GM10248 (cell line): ENCODE measurements at regions of chr1 and their contacts with region 1.

Region 1: DNA sequence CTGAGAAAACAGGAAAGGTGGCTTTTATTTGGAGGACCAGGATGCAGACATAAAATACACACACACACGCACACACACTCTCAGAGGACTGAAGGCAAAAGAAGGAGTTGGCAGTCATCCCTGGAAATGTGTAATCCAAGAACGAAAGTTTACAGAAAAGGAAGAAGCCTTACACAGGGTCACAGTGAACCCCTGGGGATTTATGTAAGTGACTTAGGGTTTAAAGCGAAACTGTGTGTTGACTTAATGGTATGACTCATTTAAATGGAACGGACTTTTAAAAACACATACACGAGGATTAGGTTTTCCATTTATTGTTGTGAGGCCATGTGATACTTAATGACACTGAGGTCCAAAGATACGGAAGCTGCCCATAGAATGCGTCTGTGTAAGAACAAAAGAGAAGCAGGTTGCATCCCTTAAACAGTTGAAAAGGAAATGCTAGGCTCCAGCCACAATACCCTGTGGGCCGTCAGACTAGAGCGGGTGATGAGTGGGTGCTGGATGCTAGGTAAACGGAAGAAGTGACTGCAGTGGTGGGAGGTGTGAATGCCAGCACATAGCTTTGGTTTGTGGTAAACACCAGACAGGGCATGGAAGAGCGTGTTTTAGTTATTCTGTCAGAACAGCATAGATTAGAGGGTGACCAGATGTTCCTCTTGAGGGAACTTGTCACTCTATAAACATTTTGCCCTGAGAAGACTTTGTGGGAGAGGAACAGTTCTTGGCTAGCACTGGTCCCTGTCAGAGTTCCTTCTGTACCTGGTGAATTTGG is 21.6 kb upstream of the BCL10 start:
- DNase-seq: peak; percentile 68
- CTCF ChIP-seq: no peak

Region 2: GRCh38 chr1:85307987-85308832 is 10.2 kb after region 1 on chr1:
- CTCF ChIA-PET with region 1: interaction called, 22 read pairs
- POLR2A ChIA-PET with region 1: no interaction called
- DNase-seq: peak; percentile 66
- CTCF ChIP-seq: peak; percentile 87